ENCODE measurements at regions of chr14 and their contacts with region 1.

Region 1: DNA sequence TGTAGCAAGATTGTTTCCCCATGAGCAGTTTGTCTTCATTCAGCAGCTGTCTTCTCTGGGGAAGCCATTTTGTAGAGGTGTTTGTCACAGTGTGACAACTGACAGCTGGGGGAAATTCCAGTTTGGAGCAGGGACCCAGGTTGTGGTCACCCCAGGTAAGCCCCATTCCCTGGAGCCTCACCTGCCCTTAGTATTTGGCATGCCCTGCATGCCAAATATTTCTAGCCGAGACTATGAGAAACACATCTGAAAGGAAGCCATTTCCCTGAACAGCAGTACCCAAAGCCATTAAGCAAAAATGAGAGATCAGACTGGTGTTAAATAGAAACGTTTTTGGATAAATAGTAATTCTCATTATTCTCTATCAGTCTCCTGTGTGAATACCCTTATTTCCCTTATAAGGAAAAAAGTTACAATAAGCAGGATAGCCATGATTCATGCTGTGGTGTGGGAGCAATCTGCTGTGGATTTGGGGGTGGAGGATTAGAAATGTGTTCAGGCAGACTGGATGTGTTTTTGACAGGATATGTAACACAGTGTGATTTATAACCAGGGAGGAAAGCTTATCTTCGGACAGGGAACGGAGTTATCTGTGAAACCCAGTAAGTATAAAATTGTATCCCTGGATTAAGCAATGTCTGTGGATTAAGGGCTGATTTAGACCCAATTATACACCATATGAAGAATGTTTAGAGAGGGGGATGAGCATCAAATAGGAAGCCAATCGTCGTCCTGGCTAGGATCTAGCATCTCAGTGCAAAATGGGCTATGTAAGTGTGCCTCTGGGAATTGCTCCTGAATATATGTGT is 68.9 kb downstream of the DAD1 start:
- DNase-seq: peak in 1 of 5 donors; percentile 43
- H3K4me3 ChIP-seq: peak overlapping the region; percentile 69
- H3K4me3 Mint-ChIP-seq: peak overlapping the region; percentile 88 to 95 (median 90)
- H3K27ac ChIP-seq: peak overlapping the region; percentile 38
- H3K27ac Mint-ChIP-seq: peak overlapping the region; percentile 90 to 98 (median 96)
- H3K4me1 ChIP-seq: peaks cover 100% of the 10 kb centered on the region
- H3K4me1 Mint-ChIP-seq: peaks cover 90 to 100% (median 98%) of the 10 kb centered on the region in 3 donors
- H3K27me3 ChIP-seq: no peaks in the 10 kb centered on the region
- H3K27me3 Mint-ChIP-seq: no peaks in the 10 kb centered on the region

Region 2: GRCh38 chr14:22505697-22506377 is 14.2 kb before region 1 on chr14:
- CTCF ChIA-PET with region 1: interaction called, 5 read pairs
- POLR2A ChIA-PET with region 1: interaction called, 33 read pairs
- DNase-seq: no peak
- H3K4me3 ChIP-seq: peak overlapping the region; percentile 65
- H3K4me3 Mint-ChIP-seq: peak overlapping the region; percentile 89 to 98 (median 91)
- H3K27ac ChIP-seq: peak overlapping the region; percentile 14
- H3K27ac Mint-ChIP-seq: peak overlapping the region; percentile 92 to 100 (median 96)
- H3K4me1 ChIP-seq: peaks cover 48% of the 10 kb centered on the region
- H3K4me1 Mint-ChIP-seq: peaks cover 55 to 66% (median 62%) of the 10 kb centered on the region in 3 donors
- H3K27me3 ChIP-seq: no peaks in the 10 kb centered on the region
- H3K27me3 Mint-ChIP-seq: peaks cover 0 to 1% of the 10 kb centered on the region in 2 donors

Region 3: DNA sequence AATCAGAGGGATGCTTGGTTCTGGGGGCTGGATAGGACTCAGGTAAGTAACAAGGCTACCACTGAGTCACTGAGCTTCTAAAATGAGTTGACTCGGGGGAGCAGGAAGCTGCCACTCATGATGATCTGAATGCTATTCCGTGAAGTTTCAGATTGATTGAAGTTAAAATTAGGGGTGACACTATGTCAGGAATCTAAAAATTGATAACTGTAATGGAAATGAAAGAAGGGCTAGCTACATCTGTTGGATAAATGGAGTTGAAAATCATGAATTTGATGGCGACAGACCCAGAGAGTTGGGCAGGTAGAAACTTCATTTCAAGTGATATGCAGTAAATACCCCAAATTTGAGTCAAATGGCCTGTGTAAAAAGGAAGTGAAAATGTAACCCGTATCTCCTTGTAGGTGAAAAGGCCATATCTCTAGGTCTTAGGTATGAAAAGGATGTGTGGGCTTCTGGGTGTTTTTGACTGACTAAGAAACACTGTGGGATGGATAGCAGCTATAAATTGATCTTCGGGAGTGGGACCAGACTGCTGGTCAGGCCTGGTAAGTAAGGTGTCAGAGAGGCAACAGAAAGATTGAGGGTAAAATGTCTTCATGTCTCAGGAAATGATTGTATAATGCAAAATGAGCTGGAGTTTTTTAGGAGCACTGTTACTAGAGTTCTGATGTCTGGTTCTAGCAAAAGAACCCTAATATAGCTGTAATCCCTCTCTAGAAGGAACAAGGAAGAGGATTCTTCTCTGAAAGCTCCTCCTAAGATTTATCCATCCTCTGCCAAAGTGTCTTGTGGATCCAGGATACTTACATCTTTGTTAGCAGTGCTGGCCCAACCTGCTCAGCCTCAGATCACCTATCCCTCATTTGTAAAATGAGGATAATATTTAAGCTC is 11.6 kb after region 1 on chr14:
- CTCF ChIA-PET with region 1: interaction called, 56 read pairs
- POLR2A ChIA-PET with region 1: interaction called, 107 read pairs
- DNase-seq: peak in 1 of 5 donors; percentile 59
- H3K4me3 ChIP-seq: peak overlapping the region; percentile 61
- H3K4me3 Mint-ChIP-seq: peak overlapping the region; percentile 81 to 93 (median 83)
- H3K27ac ChIP-seq: peak overlapping the region; percentile 45
- H3K27ac Mint-ChIP-seq: peak overlapping the region; percentile 89 to 99 (median 96)
- H3K4me1 ChIP-seq: peaks cover 93% of the 10 kb centered on the region
- H3K4me1 Mint-ChIP-seq: peaks cover 92 to 98% (median 98%) of the 10 kb centered on the region in 3 donors
- H3K27me3 ChIP-seq: no peaks in the 10 kb centered on the region
- H3K27me3 Mint-ChIP-seq: no peaks in the 10 kb centered on the region

Region 4: GRCh38 chr14:22536853-22537338 is 16.8 kb after region 1 on chr14:
- CTCF ChIA-PET with region 1: interaction called, 56 read pairs
- POLR2A ChIA-PET with region 1: interaction called, 107 read pairs
- DNase-seq: peak; percentile 52 to 90 (median 68)
- H3K4me3 ChIP-seq: peak overlapping the region; percentile 60
- H3K4me3 Mint-ChIP-seq: peak overlapping the region; percentile 81 to 93 (median 85)
- H3K27ac ChIP-seq: peak overlapping the region; percentile 36
- H3K27ac Mint-ChIP-seq: peak overlapping the region; percentile 88 to 100 (median 98)
- H3K4me1 ChIP-seq: peaks cover 99% of the 10 kb centered on the region
- H3K4me1 Mint-ChIP-seq: peaks cover 96 to 100% (median 100%) of the 10 kb centered on the region in 3 donors
- H3K27me3 ChIP-seq: no peaks in the 10 kb centered on the region
- H3K27me3 Mint-ChIP-seq: no peaks in the 10 kb centered on the region

Measured in CD8-positive, alpha-beta memory T cell (primary cell).